ENCODE measurements at regions of chr10 and their contacts with region 1.

Region 1: GRCh38 chr10:71817831-71818655 is 33.0 kb downstream of the PSAP start:
- DNase-seq: no peak
- ATAC-seq: no peak
- H3K4me3 ChIP-seq: no peak overlapping the region
- H3K27ac ChIP-seq: peak overlapping the region; percentile 23; the same call in 1 of the 2 replicates
- H3K4me1 ChIP-seq: peaks cover 39% of the 10 kb centered on the region
- H3K27me3 ChIP-seq: no peaks in the 10 kb centered on the region
- CTCF ChIP-seq: no peak

Region 2: GRCh38 chr10:71383972-71384687 is 433.9 kb before region 1 on chr10:
- CTCF ChIA-PET with region 1: no interaction called
- POLR2A ChIA-PET with region 1: no interaction called
- in situ Hi-C with region 1: no loop called
- intact Hi-C with region 1: loop called (anchors 5 kb)
- DNase-seq: peak; percentile 45
- ATAC-seq: peak; percentile 96
- H3K4me3 ChIP-seq: no peak overlapping the region
- H3K27ac ChIP-seq: no peak overlapping the region
- H3K4me1 ChIP-seq: no peaks in the 10 kb centered on the region
- H3K27me3 ChIP-seq: peaks cover 2% of the 10 kb centered on the region; the same call in 1 of the 2 replicates
- CTCF ChIP-seq: peak; percentile 99

Region 3: DNA sequence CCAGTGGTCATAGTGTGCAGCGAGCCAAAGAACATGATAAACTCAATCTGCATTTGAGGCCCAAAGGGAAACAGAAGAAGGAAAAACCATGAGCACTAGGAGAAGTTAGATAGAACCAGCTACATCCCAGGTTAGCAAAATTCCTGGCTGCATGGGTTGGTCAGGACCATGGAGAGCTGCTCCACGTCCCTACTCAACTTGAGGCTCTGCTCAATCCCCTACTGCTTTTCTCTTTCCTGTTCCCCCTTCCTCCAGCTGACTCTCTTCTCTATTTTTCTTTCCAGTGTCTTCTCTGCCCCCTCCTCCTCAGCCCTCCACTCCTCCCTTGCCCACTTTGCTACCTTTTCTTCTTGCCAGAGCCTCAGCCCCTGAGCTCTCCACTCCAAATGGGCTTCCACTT is 22.8 kb before region 1 on chr10:
- CTCF ChIA-PET with region 1: no interaction called
- POLR2A ChIA-PET with region 1: no interaction called
- in situ Hi-C with region 1: no loop called
- intact Hi-C with region 1: no loop called
- DNase-seq: no peak
- ATAC-seq: no peak
- H3K4me3 ChIP-seq: no peak overlapping the region
- H3K27ac ChIP-seq: no peak overlapping the region
- H3K4me1 ChIP-seq: no peaks in the 10 kb centered on the region
- H3K27me3 ChIP-seq: no peaks in the 10 kb centered on the region
- CTCF ChIP-seq: no peak

Measured in Panc1 (cell line).